ENCODE measurements at regions of chr18 and their contacts with region 1.

Region 1: GRCh38 chr18:4285525-4285924 is 169.6 kb downstream of the DLGAP1 start:
- DNase-seq: no peak
- H3K4me3 ChIP-seq: no peak overlapping the region
- H3K27ac ChIP-seq: no peak overlapping the region
- H3K4me1 ChIP-seq: no peaks in the 10 kb centered on the region
- H3K27me3 ChIP-seq: peaks cover 25% of the 10 kb centered on the region
- CTCF ChIP-seq: no peak

Region 2: GRCh38 chr18:4384932-4385331 is 99.4 kb after region 1 on chr18:
- CTCF ChIA-PET with region 1: no interaction called
- POLR2A ChIA-PET with region 1: interaction called, 11 read pairs
- intact Hi-C with region 1: no loop called
- DNase-seq: no peak
- H3K4me3 ChIP-seq: no peak overlapping the region
- H3K27ac ChIP-seq: no peak overlapping the region
- H3K4me1 ChIP-seq: no peaks in the 10 kb centered on the region
- H3K27me3 ChIP-seq: no peaks in the 10 kb centered on the region
- CTCF ChIP-seq: no peak